CD4-positive, alpha-beta memory T cell (primary cell): ENCODE measurements at regions of chr10 and their contacts with region 1.

Region 1: GRCh38 chr10:100508691-100509150 is 10.9 kb downstream of the SEC31B start:
- DNase-seq: peak; percentile 63 to 74 (median 68)
- H3K4me3 ChIP-seq: peak overlapping the region in 1 of 2 donors; percentile 3
- H3K4me3 Mint-ChIP-seq: peak overlapping the region; percentile 16 to 90 (median 66)
- H3K27ac ChIP-seq: peak overlapping the region; percentile 22
- H3K27ac Mint-ChIP-seq: peak overlapping the region; percentile 58 to 94 (median 86)
- H3K4me1 ChIP-seq: peaks cover 58% of the 10 kb centered on the region
- H3K4me1 Mint-ChIP-seq: peaks cover 42 to 66% (median 51%) of the 10 kb centered on the region in 4 donors
- H3K27me3 ChIP-seq: no peaks in the 10 kb centered on the region
- H3K27me3 Mint-ChIP-seq: no peaks in the 10 kb centered on the region

Region 2: DNA sequence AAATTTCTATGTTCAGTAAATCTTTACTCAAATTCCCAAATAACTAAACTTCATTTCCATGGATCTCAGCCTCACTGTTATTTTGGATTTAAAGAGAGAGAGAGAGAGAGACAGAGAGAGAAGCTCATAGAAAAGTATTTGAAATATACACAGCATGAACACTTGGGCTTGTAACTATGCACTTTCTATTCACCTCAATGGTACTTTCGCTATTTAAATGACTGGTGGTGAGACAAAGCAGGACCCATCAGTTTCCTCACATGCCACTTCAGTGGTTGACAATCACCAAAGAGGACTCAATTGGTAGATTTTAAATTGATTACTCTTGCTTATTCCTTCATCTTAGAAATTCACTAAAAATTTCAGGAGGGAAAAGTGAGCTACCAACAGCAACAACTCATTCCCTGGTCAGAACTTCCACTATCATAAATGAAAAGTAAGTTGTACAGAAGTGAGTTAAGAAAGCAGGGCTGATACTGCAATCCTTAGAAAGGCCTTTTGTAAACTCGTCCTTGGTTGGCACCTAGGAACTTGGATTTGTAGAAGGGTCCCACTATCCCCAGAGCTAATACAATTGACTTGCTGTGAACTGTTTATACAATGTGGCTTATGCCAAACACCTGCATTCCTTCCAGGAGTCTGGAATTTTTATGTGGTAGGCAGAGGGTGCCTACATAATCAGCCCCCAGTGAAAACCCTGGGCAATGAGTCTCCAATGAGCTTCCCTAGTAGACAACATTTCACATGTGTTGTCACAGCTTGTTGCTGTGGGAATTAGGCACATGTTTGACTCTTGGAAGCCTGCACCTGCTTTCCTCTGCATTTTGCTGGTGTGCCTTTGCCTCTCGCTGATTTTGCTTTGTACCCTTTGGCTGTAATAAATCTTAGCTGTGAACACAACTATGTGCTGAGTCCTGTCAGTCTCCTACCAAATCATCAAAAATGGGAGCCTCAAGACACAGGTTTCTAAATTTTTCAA is 333.7 kb before region 1 on chr10:
- CTCF ChIA-PET with region 1: no interaction called
- POLR2A ChIA-PET with region 1: no interaction called
- intact Hi-C with region 1: no loop called
- DNase-seq: no peak
- H3K4me3 ChIP-seq: no peak overlapping the region
- H3K4me3 Mint-ChIP-seq: no peak overlapping the region
- H3K27ac ChIP-seq: no peak overlapping the region
- H3K27ac Mint-ChIP-seq: peak overlapping the region in 5 of 7 donors; percentile 32 to 77 (median 53)
- H3K4me1 ChIP-seq: no peaks in the 10 kb centered on the region
- H3K4me1 Mint-ChIP-seq: peaks cover 12 to 32% (median 16%) of the 10 kb centered on the region in 4 donors
- H3K27me3 ChIP-seq: no peaks in the 10 kb centered on the region
- H3K27me3 Mint-ChIP-seq: no peaks in the 10 kb centered on the region

Region 3: DNA sequence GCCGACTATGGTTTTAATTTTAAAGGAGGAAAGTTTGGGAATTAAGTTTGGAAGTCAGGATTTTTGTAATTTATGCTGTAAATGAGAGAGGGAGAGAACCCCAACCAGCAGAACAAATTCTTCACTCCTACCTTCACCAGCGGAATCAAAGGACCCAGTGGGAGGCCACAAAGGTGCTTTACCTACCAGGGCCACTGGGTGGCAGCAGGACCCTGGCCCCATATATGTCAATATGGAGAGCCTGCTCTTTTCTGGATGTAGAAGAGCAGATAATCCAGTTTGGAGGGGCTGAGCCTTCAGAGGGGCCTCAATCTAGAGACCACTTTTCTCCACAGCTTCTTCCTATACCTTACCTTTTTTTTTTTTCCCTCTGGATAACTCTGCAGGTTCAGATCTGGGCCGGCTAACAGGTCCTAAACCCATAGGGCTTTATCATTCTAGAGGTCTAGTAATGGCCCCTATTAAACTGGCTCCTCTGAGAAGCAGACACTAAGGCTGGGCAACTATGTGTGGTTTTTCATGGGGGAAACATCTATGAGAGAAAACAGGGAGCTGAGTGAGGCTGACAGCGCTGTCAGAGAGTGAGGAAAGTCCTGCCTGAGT is 170.2 kb before region 1 on chr10:
- CTCF ChIA-PET with region 1: interaction called, 122 read pairs
- POLR2A ChIA-PET with region 1: no interaction called
- intact Hi-C with region 1: loop called (anchors 1 kb)
- DNase-seq: peak; percentile 68 to 74 (median 69)
- H3K4me3 ChIP-seq: no peak overlapping the region
- H3K4me3 Mint-ChIP-seq: no peak overlapping the region
- H3K27ac ChIP-seq: no peak overlapping the region
- H3K27ac Mint-ChIP-seq: peak overlapping the region in 2 of 7 donors; percentile 3 to 35
- H3K4me1 ChIP-seq: no peaks in the 10 kb centered on the region
- H3K4me1 Mint-ChIP-seq: no peaks in the 10 kb centered on the region
- H3K27me3 ChIP-seq: no peaks in the 10 kb centered on the region
- H3K27me3 Mint-ChIP-seq: peaks cover 0 to 2% of the 10 kb centered on the region in 2 donors

Region 4: GRCh38 chr10:100433253-100434240 is 75.2 kb before region 1 on chr10:
- CTCF ChIA-PET with region 1: interaction called, 68 read pairs
- POLR2A ChIA-PET with region 1: interaction called, 3 read pairs
- intact Hi-C with region 1: loop called (anchors 1 kb)
- DNase-seq: peak; percentile 87 to 93 (median 90)
- H3K4me3 ChIP-seq: no peak overlapping the region
- H3K4me3 Mint-ChIP-seq: peak overlapping the region in 1 of 8 donors; percentile 4
- H3K27ac ChIP-seq: no peak overlapping the region
- H3K27ac Mint-ChIP-seq: peak overlapping the region in 2 of 7 donors; percentile 11 to 14
- H3K4me1 ChIP-seq: no peaks in the 10 kb centered on the region
- H3K4me1 Mint-ChIP-seq: peaks cover 0 to 3% (median 1%) of the 10 kb centered on the region in 4 donors
- H3K27me3 ChIP-seq: no peaks in the 10 kb centered on the region
- H3K27me3 Mint-ChIP-seq: peaks cover 2% of the 10 kb centered on the region in 2 donors

Region 5: GRCh38 chr10:100481462-100482081 is 27.1 kb before region 1 on chr10:
- CTCF ChIA-PET with region 1: interaction called, 101 read pairs
- POLR2A ChIA-PET with region 1: interaction called, 23 read pairs
- intact Hi-C with region 1: loop called (anchors 1 kb)
- DNase-seq: peak; percentile 88 to 95 (median 91)
- H3K4me3 ChIP-seq: peak overlapping the region; percentile 49 to 82
- H3K4me3 Mint-ChIP-seq: peak overlapping the region; percentile 75 to 92 (median 86)
- H3K27ac ChIP-seq: no peak overlapping the region
- H3K27ac Mint-ChIP-seq: peak overlapping the region in 2 of 7 donors; percentile 42 to 90
- H3K4me1 ChIP-seq: peaks cover 12% of the 10 kb centered on the region
- H3K4me1 Mint-ChIP-seq: peaks cover 3 to 19% (median 10%) of the 10 kb centered on the region in 4 donors
- H3K27me3 ChIP-seq: peaks cover 18% of the 10 kb centered on the region
- H3K27me3 Mint-ChIP-seq: peaks cover 11 to 16% of the 10 kb centered on the region in 2 donors

Region 6: DNA sequence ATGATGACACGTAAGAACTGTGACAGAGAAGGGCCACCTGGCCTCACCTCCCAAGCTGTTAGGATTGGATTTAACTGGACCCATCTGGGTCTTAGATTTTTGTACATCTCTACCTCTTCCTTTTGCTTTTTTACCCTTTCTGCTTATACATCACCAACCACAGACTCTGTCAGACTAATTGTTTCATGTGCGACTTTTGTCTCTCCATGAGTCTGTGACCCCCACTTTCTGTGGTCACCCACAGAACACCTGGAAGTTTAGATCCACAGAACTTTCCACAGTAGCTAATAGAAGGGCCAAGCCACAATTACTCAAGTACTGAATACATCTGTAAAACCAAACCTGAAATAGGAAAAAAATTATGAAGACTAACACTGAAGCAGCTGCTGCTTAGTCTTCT is 12.2 kb before region 1 on chr10:
- CTCF ChIA-PET with region 1: interaction called, 36 read pairs
- POLR2A ChIA-PET with region 1: no interaction called
- intact Hi-C with region 1: no loop called
- DNase-seq: no peak
- H3K4me3 ChIP-seq: no peak overlapping the region
- H3K4me3 Mint-ChIP-seq: peak overlapping the region in 1 of 8 donors; percentile 49
- H3K27ac ChIP-seq: no peak overlapping the region
- H3K27ac Mint-ChIP-seq: no peak overlapping the region
- H3K4me1 ChIP-seq: no peaks in the 10 kb centered on the region
- H3K4me1 Mint-ChIP-seq: peaks cover 0 to 7% (median under 1%) of the 10 kb centered on the region in 4 donors
- H3K27me3 ChIP-seq: no peaks in the 10 kb centered on the region
- H3K27me3 Mint-ChIP-seq: no peaks in the 10 kb centered on the region

Region 7: GRCh38 chr10:100524638-100525037 is 15.9 kb after region 1 on chr10:
- CTCF ChIA-PET with region 1: interaction called, 133 read pairs
- POLR2A ChIA-PET with region 1: interaction called, 13 read pairs
- intact Hi-C with region 1: loop called (anchors 1 kb)
- DNase-seq: no peak
- H3K4me3 ChIP-seq: no peak overlapping the region
- H3K4me3 Mint-ChIP-seq: peak overlapping the region in 1 of 8 donors; percentile 24
- H3K27ac ChIP-seq: no peak overlapping the region
- H3K27ac Mint-ChIP-seq: peak overlapping the region in 1 of 7 donors; percentile 64
- H3K4me1 ChIP-seq: peaks cover 26% of the 10 kb centered on the region
- H3K4me1 Mint-ChIP-seq: peaks cover 14 to 36% (median 24%) of the 10 kb centered on the region in 4 donors
- H3K27me3 ChIP-seq: no peaks in the 10 kb centered on the region
- H3K27me3 Mint-ChIP-seq: no peaks in the 10 kb centered on the region

Region 8: DNA sequence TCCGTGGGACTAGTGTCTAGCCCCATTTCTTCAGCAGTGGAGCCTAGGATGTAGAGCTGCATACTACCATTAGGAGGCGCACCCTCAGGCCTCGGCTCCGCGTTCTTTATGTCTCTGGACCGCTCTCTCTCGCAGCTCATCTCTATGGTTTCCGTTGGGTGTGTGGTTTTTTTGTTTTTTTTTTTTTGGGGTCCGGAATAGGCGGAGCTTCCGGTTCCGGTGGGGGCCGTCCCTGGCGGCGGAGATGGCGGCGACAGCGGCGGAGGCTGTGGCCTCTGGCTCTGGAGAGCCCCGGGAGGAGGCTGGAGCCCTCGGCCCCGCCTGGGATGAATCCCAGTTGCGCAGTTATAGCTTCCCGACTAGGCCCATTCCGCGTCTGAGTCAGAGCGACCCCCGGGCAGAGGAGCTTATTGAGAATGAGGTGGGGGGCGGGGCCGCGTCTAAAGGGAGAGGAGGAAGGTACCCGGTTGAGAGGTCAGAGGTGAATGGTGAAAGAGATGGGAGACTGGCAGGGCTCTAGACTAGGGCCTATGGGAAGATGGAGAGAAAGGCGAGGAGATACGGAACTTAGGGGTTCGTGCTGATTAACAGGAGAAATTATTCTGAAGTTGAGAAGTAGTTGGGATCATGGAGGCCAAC is 27.1 kb after region 1 on chr10 and contains the start of gene HIF1AN:
- CTCF ChIA-PET with region 1: interaction called, 8 read pairs
- POLR2A ChIA-PET with region 1: interaction called, 19 read pairs
- intact Hi-C with region 1: no loop called
- DNase-seq: peak; percentile 92 to 95 (median 94)
- H3K4me3 ChIP-seq: peak within 1 kb of the TSS; percentile 48 to 69
- H3K4me3 Mint-ChIP-seq: peak within 1 kb of the TSS in 1 of 8 donors; percentile 40
- H3K27ac ChIP-seq: peak within 1 kb of the TSS; percentile 77
- H3K27ac Mint-ChIP-seq: peak within 1 kb of the TSS in 3 of 7 donors; percentile 8 to 87 (median 32)
- H3K4me1 ChIP-seq: peaks cover 34% of the 10 kb centered on the region
- H3K4me1 Mint-ChIP-seq: peaks cover 12 to 23% (median 18%) of the 10 kb centered on the region in 4 donors
- H3K27me3 ChIP-seq: no peaks in the 10 kb centered on the region
- H3K27me3 Mint-ChIP-seq: no peaks in the 10 kb centered on the region
- total RNA-seq, gene HIF1AN: 69.6 to 69.8 TPM

Region 9: DNA sequence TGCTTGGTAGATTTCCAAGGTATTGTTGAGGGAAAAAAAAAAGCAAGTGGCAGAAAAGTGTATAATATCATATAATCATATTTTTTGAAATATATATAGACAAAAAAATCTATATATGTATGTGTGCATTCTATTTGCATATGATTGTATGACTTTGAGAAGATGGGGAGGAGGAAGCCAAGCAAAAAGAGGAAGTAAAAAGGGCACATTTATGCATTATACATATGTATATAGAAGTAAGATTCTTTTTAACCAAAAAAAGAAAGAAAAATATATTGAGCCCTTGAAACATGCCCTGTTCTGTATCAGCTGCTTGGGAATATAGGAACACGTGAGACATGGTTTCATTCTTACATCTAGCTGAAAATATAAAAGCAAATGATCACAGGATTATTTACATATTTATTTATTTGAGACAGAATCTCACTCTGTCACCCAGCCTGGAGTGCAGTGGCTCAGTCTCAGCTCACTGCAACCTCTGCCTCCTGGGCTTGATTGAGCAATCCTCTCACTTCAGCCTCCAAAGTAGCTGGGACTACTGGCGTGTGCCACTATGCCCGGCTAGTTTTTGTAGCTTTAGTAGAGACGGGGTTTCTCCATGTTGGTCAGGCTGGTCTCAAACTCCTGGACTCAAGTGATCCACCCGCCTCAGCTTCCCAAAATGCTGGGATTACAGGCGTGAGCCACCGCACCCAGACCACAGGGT is 386.0 kb after region 1 on chr10:
- CTCF ChIA-PET with region 1: no interaction called
- POLR2A ChIA-PET with region 1: no interaction called
- intact Hi-C with region 1: no loop called
- DNase-seq: no peak
- H3K4me3 ChIP-seq: no peak overlapping the region
- H3K4me3 Mint-ChIP-seq: no peak overlapping the region
- H3K27ac ChIP-seq: no peak overlapping the region
- H3K27ac Mint-ChIP-seq: no peak overlapping the region
- H3K4me1 ChIP-seq: no peaks in the 10 kb centered on the region
- H3K4me1 Mint-ChIP-seq: peaks cover 4 to 11% (median 7%) of the 10 kb centered on the region in 4 donors
- H3K27me3 ChIP-seq: no peaks in the 10 kb centered on the region
- H3K27me3 Mint-ChIP-seq: peaks cover 22 to 23% of the 10 kb centered on the region in 2 donors